Activated CD8-positive, alpha-beta memory T cell treated with anti-CD3 and anti-CD28 coated beads, Interleukin-2, amount 10 ng/mL, durations not matched to agents 7 days and 5 days (primary cell): ENCODE measurements at regions of chr15 and their contacts with region 1.

Region 1: GRCh38 chr15:41603941-41604911 is 45.2 kb downstream of the TYRO3 start:
- DNase-seq: peak; percentile 57
- ATAC-seq: peak; percentile 86
- H3K4me3 Mint-ChIP-seq: no peak overlapping the region
- H3K27ac Mint-ChIP-seq: no peak overlapping the region
- H3K4me1 Mint-ChIP-seq: peaks cover 8% of the 10 kb centered on the region
- H3K27me3 Mint-ChIP-seq: peaks cover 31% of the 10 kb centered on the region

Region 2: GRCh38 chr15:41493205-41493901 is 110.9 kb before region 1 on chr15 and contains the start of gene ITPKA:
- CTCF ChIA-PET with region 1: no interaction called
- DNase-seq: peak; percentile 76
- ATAC-seq: peak; percentile 71
- H3K4me3 Mint-ChIP-seq: peak within 1 kb of the TSS; percentile 47
- H3K27ac Mint-ChIP-seq: no peak within 1 kb of the TSS
- H3K4me1 Mint-ChIP-seq: peaks cover 41% of the 10 kb centered on the region
- H3K27me3 Mint-ChIP-seq: peaks cover 52% of the 10 kb centered on the region
- total RNA-seq, gene ITPKA: 0.52 TPM in 1 of 2 experiments, not detected in the other

Region 3: GRCh38 chr15:41575282-41575681 is 28.9 kb before region 1 on chr15:
- CTCF ChIA-PET with region 1: no interaction called
- DNase-seq: no peak
- ATAC-seq: no peak
- H3K4me3 Mint-ChIP-seq: no peak overlapping the region
- H3K27ac Mint-ChIP-seq: no peak overlapping the region
- H3K4me1 Mint-ChIP-seq: no peaks in the 10 kb centered on the region
- H3K27me3 Mint-ChIP-seq: peaks cover 2% of the 10 kb centered on the region

Region 4: DNA sequence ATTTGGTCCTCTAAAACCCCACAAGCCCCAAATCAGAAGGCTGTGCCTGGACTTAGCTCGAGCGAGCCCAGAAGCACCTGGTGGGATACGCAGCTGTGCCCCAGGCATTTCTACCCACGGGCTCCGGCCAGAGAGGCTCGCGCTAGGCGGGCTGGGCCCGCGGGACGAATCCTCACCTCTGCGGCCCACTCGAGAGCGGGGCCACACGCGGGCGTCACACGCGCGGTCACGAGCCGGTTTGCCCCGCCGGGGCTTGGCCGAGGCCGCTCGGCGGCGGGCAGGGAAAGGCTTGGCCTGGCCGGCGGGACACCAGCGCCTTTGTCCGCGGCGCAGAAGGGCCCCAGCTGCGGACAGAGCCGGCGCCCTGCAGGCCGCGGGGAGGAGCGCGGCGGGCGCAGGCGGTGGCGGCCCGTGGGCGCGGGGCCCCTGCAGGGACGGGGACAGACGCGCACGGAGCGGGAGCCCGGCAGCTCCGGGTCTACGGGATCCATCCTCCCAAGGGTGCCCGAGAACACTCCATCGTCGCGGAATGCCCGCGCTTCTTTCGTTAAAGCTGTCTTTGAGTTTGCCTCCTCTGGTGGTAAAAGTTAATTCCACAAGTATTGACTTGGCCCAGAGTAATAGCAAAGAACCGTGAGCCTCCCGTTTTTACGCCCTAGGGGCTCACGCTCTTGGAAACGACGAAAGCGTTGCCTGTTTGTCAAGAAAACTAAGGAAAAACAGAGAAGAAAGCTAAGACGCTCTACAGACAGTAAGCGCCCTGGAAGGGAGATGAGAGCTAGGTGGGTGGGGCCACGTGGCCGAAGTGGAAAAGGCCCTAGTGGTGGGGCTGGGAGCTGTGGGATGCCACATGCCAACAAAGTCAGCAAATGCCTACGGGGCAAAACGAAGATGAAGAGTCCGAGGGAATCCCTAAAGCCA is 18.8 kb before region 1 on chr15:
- CTCF ChIA-PET with region 1: interaction called, 14 read pairs
- DNase-seq: peak; percentile 46
- ATAC-seq: peak; percentile 78
- H3K4me3 Mint-ChIP-seq: peak overlapping the region; percentile 37
- H3K27ac Mint-ChIP-seq: no peak overlapping the region
- H3K4me1 Mint-ChIP-seq: peaks cover 8% of the 10 kb centered on the region
- H3K27me3 Mint-ChIP-seq: peaks cover 57% of the 10 kb centered on the region

Region 5: GRCh38 chr15:41637086-41637485 is 32.9 kb after region 1 on chr15:
- CTCF ChIA-PET with region 1: no interaction called
- DNase-seq: no peak
- ATAC-seq: no peak
- H3K4me3 Mint-ChIP-seq: no peak overlapping the region
- H3K27ac Mint-ChIP-seq: no peak overlapping the region
- H3K4me1 Mint-ChIP-seq: peaks cover 3% of the 10 kb centered on the region
- H3K27me3 Mint-ChIP-seq: no peaks in the 10 kb centered on the region

Region 6: GRCh38 chr15:41653760-41654159 is 49.5 kb after region 1 on chr15:
- CTCF ChIA-PET with region 1: no interaction called
- DNase-seq: no peak
- ATAC-seq: no peak
- H3K4me3 Mint-ChIP-seq: no peak overlapping the region
- H3K27ac Mint-ChIP-seq: no peak overlapping the region
- H3K4me1 Mint-ChIP-seq: no peaks in the 10 kb centered on the region
- H3K27me3 Mint-ChIP-seq: peaks cover 25% of the 10 kb centered on the region